ENCODE measurements at regions of chr1 and their contacts with region 1.

Region 1: GRCh38 chr1:218401998-218402785 is 57.1 kb downstream of the TGFB2 start:
- DNase-seq: no peak
- ATAC-seq: peak; percentile 55; the same call in 1 of the 2 replicates
- H3K4me3 ChIP-seq: no peak overlapping the region
- H3K27ac ChIP-seq: peak overlapping the region; percentile 78
- H3K4me1 ChIP-seq: peaks cover 22% of the 10 kb centered on the region
- H3K27me3 ChIP-seq: no peaks in the 10 kb centered on the region
- CTCF ChIP-seq: no peak

Region 2: DNA sequence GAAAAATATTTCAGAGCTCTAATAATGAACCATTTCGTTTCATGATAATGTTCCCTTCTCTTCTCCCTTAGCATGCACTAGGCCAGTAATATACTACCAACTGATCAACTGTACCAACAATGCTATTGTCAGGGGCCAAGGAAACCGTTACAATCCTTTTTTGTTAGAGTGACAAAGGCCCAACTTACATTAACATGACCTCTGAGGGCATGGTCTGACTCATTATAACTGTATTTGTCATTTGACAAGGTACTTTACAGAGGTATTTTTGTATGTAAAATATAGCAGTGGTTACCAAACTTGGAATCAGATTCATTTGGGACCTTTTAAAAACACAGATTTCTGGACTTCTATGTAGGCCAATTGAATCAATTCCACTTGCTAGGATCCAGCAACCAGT is 219.7 kb before region 1 on chr1:
- CTCF ChIA-PET with region 1: no interaction called
- POLR2A ChIA-PET with region 1: no interaction called
- in situ Hi-C with region 1: no loop called
- intact Hi-C with region 1: no loop called
- DNase-seq: no peak
- ATAC-seq: no peak
- H3K4me3 ChIP-seq: no peak overlapping the region
- H3K27ac ChIP-seq: no peak overlapping the region
- H3K4me1 ChIP-seq: no peaks in the 10 kb centered on the region
- H3K27me3 ChIP-seq: no peaks in the 10 kb centered on the region
- CTCF ChIP-seq: no peak

Region 3: DNA sequence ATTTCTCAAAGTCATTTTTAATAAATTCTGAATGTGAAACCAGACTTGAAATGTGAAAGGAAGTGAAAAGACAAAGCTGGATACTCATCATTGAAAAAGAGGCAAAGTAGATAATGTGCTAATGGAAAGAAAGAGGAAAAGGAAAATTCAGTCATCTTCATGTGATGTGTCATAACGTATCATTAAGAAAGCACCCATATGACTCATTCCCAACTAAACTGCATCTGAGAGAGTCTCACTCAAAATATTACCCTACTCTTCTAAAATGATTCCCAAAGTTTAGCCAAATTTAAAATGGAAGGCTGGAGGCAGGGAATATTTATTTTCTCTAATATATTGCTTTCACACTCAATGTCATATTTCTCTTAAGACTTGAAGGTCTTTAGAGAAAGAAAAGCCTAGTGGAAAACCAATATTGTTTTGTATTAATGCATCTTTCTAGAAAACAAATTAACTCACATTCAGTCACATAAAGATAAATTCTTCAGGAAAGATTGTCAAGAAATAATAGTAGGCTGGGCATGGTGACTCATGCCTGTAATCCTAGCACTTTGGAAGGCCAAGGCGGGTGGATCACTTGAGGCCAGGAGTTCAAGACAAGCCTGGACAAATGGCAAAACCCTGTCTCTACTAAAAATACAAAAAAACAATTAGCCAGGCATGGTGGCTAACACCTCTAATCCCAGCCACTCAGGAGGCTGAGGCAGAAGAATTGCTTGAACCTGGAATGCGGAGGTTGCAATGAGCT is 1396.3 kb after region 1 on chr1:
- CTCF ChIA-PET with region 1: no interaction called
- POLR2A ChIA-PET with region 1: interaction called, 13 read pairs
- in situ Hi-C with region 1: no loop called
- intact Hi-C with region 1: no loop called
- DNase-seq: no peak
- ATAC-seq: no peak
- H3K4me3 ChIP-seq: no peak overlapping the region
- H3K27ac ChIP-seq: no peak overlapping the region
- H3K4me1 ChIP-seq: no peaks in the 10 kb centered on the region
- H3K27me3 ChIP-seq: no peaks in the 10 kb centered on the region; the same call in 1 of the 2 replicates
- CTCF ChIP-seq: no peak

Measured in Panc1 (cell line).